ENCODE measurements at regions of chr3 and their contacts with region 1.

Region 1: DNA sequence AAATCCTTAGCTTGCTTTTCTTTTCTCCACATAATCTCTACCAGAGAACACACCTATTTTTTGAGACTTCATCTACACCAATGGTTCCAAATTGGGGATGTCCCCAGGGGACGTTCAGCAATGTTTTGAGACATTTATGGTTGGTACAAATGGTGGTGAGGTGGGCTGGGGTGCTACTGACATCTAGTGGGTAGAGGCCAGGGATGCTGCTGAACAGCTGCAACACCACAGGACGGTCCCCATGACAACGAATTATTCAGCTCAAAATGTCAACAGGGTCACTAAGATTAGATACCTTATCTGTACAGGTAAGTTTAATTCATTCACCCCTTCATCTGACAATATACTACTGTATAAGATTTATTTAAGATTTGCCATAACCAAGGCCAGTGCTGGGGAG is 14.3 kb downstream of the GK5 start:
- DNase-seq: peak; percentile 7 to 26
- ATAC-seq: peak; percentile 90 to 93 (median 93)
- H3K4me3 ChIP-seq: no peak overlapping the region
- H3K4me3 Mint-ChIP-seq: peak overlapping the region; percentile 0
- H3K27ac ChIP-seq: no peak overlapping the region
- H3K27ac Mint-ChIP-seq: peak overlapping the region; percentile 64 to 91
- H3K4me1 ChIP-seq: no peaks in the 10 kb centered on the region
- H3K4me1 Mint-ChIP-seq: peaks cover 52 to 55% of the 10 kb centered on the region in 2 donors
- H3K27me3 ChIP-seq: no peaks in the 10 kb centered on the region
- H3K27me3 Mint-ChIP-seq: no peaks in the 10 kb centered on the region
- CTCF ChIP-seq: peak; percentile 17

Region 2: GRCh38 chr3:142129516-142130171 is 81.4 kb before region 1 on chr3:
- intact Hi-C with region 1: loop called (anchors 1 kb)
- DNase-seq: no peak
- ATAC-seq: no peak
- H3K4me3 ChIP-seq: no peak overlapping the region
- H3K4me3 Mint-ChIP-seq: peak overlapping the region; percentile 54
- H3K27ac ChIP-seq: peak overlapping the region; percentile 43
- H3K27ac Mint-ChIP-seq: peak overlapping the region; percentile 71 to 86
- H3K4me1 ChIP-seq: peaks cover 30% of the 10 kb centered on the region
- H3K4me1 Mint-ChIP-seq: peaks cover 46 to 53% of the 10 kb centered on the region in 2 donors
- H3K27me3 ChIP-seq: no peaks in the 10 kb centered on the region
- H3K27me3 Mint-ChIP-seq: no peaks in the 10 kb centered on the region
- CTCF ChIP-seq: no peak

Measured in natural killer cell (primary cell).